Activated T-helper 1 cell treated with anti-CD3 and anti-CD28 coated beads, Interleukin-12 subunit alpha, Interleukin-12 subunit beta, Interleukin-2, Interleukin-4 antibody, amounts not matched to agents 30 ng/mL and 10 ng/mL and 1 ng/mL, durations not matched to agents 14 hours and 24 hours and 36 hours (primary cell): ENCODE measurements at regions of chr15 and their contacts with region 1.

Region 1: GRCh38 chr15:73972984-73973682 is 19.0 kb downstream of the STOML1 start:
- DNase-seq: peak; percentile 71
- H3K4me3 Mint-ChIP-seq: peak overlapping the region; percentile 30
- H3K27ac Mint-ChIP-seq: no peak overlapping the region
- H3K4me1 Mint-ChIP-seq: peaks cover 38% of the 10 kb centered on the region
- H3K27me3 Mint-ChIP-seq: peaks cover 14% of the 10 kb centered on the region

Region 2: GRCh38 chr15:73767821-73768501 is 205.2 kb before region 1 on chr15:
- intact Hi-C with region 1: no loop called
- DNase-seq: no peak
- H3K4me3 Mint-ChIP-seq: no peak overlapping the region
- H3K27ac Mint-ChIP-seq: no peak overlapping the region
- H3K4me1 Mint-ChIP-seq: no peaks in the 10 kb centered on the region
- H3K27me3 Mint-ChIP-seq: peaks cover 11% of the 10 kb centered on the region

Region 3: GRCh38 chr15:74007820-74008371 is 34.8 kb after region 1 on chr15:
- intact Hi-C with region 1: loop called (anchors 2 kb)
- DNase-seq: peak; percentile 30
- H3K4me3 Mint-ChIP-seq: peak overlapping the region; percentile 79
- H3K27ac Mint-ChIP-seq: peak overlapping the region; percentile 96
- H3K4me1 Mint-ChIP-seq: peaks cover 75% of the 10 kb centered on the region
- H3K27me3 Mint-ChIP-seq: no peaks in the 10 kb centered on the region

Region 4: GRCh38 chr15:74044267-74045110 is 71.4 kb after region 1 on chr15:
- intact Hi-C with region 1: loop called (anchors 1 kb)
- DNase-seq: no peak
- H3K4me3 Mint-ChIP-seq: no peak overlapping the region
- H3K27ac Mint-ChIP-seq: no peak overlapping the region
- H3K4me1 Mint-ChIP-seq: peaks cover 10% of the 10 kb centered on the region
- H3K27me3 Mint-ChIP-seq: no peaks in the 10 kb centered on the region

Region 5: DNA sequence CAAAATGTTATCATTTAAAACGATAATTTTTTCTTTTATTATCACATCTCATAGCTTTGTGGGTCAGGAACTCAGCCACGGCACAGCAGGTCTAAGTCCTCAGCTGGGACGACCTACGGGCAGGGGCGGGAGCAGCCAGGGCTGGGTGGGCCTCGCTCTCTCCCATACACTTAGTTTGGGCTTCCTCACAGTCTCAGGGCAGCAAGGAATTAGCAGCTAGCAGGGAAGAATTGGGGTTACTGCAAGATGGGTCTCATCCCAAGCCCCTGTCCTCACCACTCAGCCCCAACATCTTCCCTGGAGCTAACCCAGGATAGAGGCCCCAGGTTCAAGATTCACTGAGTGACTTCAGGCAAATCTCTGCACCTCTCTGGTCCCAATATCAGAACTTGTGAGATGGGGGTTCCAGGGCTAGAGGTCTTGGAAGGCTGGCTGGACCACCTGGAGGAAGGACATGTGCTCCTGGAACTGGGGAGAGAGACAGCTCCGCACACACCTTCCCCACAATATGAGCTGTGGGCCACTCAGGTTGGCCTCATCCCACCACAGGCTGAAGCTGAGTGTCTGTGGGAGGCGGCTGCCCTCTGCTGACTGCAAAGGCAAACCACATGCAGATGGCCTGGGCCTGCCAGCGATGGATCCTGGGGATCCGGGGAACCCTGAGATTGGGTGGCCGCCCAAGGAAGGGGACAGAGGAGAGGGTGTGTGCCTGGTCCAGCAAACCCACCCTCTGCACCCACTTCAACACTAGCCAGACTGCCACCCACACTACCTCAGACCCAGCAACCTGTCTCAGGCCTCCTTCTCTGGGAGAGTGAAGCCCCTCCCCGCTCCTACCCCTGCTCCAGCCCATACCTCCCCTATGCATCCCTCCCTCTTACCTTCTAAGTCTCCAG is 349.3 kb after region 1 on chr15:
- intact Hi-C with region 1: loop called (anchors 1 kb)
- DNase-seq: peak; percentile 31
- H3K4me3 Mint-ChIP-seq: no peak overlapping the region
- H3K27ac Mint-ChIP-seq: no peak overlapping the region
- H3K4me1 Mint-ChIP-seq: no peaks in the 10 kb centered on the region
- H3K27me3 Mint-ChIP-seq: peaks cover 2% of the 10 kb centered on the region